WTC11 (cell line): ENCODE measurements at regions of chr20 and their contacts with region 1.

Region 1: DNA sequence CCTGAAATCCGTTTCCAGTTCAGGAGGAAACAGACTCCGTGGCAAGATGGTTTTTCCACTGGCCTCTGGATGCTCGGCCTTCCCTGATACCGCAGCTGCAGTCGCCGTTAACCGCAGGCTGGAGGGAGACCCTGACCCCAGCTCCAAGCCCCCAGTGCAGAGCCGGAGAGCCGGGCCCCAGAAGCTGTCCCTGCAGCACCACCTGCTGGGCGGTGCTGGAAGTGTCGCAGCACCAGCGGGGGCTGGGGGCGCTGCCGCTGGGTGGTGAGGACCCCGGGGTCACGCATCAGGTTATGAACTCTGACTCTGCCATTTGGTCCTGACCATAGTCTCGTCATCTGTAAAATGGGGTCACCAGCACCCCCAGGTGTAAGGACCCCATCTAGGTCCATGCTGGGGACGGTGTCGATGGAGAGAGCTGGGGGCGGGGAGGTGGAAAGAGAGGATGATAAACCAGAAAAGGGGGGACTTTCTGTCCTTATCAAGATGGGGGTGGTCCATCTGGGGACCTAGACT is 20.7 kb upstream of the CHRNA4 start:
- DNase-seq: peak; percentile 79
- ATAC-seq: peak; percentile 65
- H3K4me3 Mint-ChIP-seq: no peak overlapping the region
- H3K27ac Mint-ChIP-seq: no peak overlapping the region
- H3K4me1 Mint-ChIP-seq: peaks cover 18% of the 10 kb centered on the region
- H3K27me3 Mint-ChIP-seq: peaks cover 15% of the 10 kb centered on the region
- CTCF ChIP-seq: peak; percentile 95

Region 2: GRCh38 chr20:63253438-63254236 is 128.2 kb before region 1 on chr20:
- CTCF ChIA-PET with region 1: interaction called, 10 read pairs
- POLR2A ChIA-PET with region 1: no interaction called
- DNase-seq: peak; percentile 79
- ATAC-seq: peak; percentile 47
- H3K4me3 Mint-ChIP-seq: peak overlapping the region; percentile 62
- H3K27ac Mint-ChIP-seq: no peak overlapping the region
- H3K4me1 Mint-ChIP-seq: peaks cover 23% of the 10 kb centered on the region
- H3K27me3 Mint-ChIP-seq: peaks cover 51% of the 10 kb centered on the region
- CTCF ChIP-seq: no peak

Region 3: GRCh38 chr20:63309261-63310071 is 72.4 kb before region 1 on chr20:
- CTCF ChIA-PET with region 1: interaction called, 191 read pairs
- POLR2A ChIA-PET with region 1: interaction called, 3 read pairs
- DNase-seq: peak; percentile 75
- ATAC-seq: peak; percentile 76
- H3K4me3 Mint-ChIP-seq: no peak overlapping the region
- H3K27ac Mint-ChIP-seq: no peak overlapping the region
- H3K4me1 Mint-ChIP-seq: no peaks in the 10 kb centered on the region
- H3K27me3 Mint-ChIP-seq: peaks cover 3% of the 10 kb centered on the region; the same call in 1 of the 2 replicates
- CTCF ChIP-seq: peak; percentile 94

Region 4: DNA sequence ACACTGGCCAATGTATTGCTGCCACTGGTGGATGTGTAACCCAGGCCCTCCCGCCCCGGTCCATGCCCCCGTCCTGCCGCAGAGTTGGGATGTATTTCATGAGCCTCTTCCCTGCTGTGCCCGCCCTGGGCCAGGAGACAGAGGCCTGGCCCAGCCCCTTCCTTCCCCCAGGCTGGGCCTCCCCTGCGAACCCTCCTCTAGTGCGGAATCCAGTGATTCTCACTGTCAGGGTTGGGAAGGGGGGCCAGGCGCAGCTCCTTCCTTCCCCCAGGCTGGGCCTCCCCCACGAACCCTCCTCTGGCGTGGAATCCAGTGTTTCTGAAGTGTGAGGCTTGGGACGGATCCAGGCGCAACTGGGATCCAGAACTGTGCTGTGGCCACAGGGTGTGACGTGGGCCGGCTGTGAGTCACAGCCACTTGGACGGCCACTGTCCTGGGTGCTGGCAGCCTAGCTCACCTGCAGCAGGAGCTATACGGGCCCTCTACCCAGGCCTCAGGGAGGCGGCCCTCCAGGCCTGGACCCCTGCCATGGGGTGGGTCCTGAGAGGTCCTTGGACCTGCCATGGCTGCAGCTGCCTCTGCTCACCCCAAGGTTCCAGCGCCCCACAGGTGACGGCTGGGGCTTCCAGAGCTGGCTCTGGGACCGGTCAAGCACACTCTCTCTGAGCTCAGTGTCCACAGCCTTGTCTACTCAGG is 60.6 kb before region 1 on chr20:
- CTCF ChIA-PET with region 1: interaction called, 14 read pairs
- POLR2A ChIA-PET with region 1: no interaction called
- DNase-seq: no peak
- ATAC-seq: no peak
- H3K4me3 Mint-ChIP-seq: no peak overlapping the region
- H3K27ac Mint-ChIP-seq: no peak overlapping the region
- H3K4me1 Mint-ChIP-seq: peaks cover 2% of the 10 kb centered on the region; the same call in 1 of the 2 replicates
- H3K27me3 Mint-ChIP-seq: no peaks in the 10 kb centered on the region
- CTCF ChIP-seq: no peak

Region 5: GRCh38 chr20:63351811-63352591 is 29.9 kb before region 1 on chr20:
- CTCF ChIA-PET with region 1: interaction called, 20 read pairs
- POLR2A ChIA-PET with region 1: interaction called, 3 read pairs
- DNase-seq: peak; percentile 79
- ATAC-seq: peak; percentile 87
- H3K4me3 Mint-ChIP-seq: no peak overlapping the region
- H3K27ac Mint-ChIP-seq: no peak overlapping the region
- H3K4me1 Mint-ChIP-seq: peaks cover 6% of the 10 kb centered on the region
- H3K27me3 Mint-ChIP-seq: no peaks in the 10 kb centered on the region
- CTCF ChIP-seq: no peak

Region 6: DNA sequence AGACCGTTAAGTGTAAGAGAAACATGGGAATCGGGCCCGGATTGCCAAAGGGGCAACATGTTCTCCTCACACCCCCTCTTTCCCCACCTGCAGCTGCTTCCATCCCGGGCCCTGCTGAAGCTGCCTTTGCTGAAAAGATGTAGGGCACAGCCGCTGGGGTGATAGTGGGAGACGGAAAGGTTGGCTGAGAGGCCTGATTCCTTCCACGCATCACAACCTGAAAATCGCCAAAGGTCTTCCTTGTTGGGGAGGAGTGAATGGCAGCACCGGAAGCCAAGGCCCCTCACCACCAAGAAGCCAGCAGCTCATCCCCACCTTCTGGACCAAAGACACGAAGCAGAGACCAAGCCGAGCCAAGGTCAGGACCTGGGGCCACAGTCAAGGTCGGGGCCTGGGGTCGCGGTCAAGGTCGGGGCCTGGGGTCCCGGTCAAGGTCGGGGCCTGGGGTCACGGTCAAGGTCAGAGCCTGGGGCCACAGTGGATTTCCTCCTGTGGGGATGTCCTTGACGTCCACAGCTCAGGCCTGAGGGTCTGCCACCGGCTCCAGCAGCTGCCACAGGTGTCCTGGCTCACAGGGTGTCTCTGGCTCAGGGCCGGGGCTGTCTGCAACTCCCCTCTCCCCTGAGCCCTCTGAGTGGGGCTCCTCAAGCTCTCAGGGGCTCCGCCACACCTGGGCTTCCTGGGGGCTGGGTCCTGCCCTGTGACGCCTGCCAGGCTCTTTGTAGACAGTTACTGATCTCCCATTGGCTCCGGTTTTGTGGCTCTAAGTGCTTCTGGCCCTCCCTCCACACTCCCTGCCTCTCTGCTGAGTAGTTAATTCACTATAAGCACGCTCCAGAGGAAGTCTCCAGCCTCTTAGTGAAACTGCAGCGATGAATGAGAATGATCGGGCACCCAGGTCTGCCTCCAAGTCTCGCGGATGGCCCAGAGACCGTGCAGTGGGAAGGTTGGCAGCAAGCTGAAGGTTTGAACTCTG is 15.2 kb before region 1 on chr20:
- CTCF ChIA-PET with region 1: interaction called, 68 read pairs
- POLR2A ChIA-PET with region 1: interaction called, 4 read pairs
- DNase-seq: no peak
- ATAC-seq: no peak
- H3K4me3 Mint-ChIP-seq: no peak overlapping the region
- H3K27ac Mint-ChIP-seq: no peak overlapping the region; the same call in 1 of the 2 replicates
- H3K4me1 Mint-ChIP-seq: peaks cover 18% of the 10 kb centered on the region
- H3K27me3 Mint-ChIP-seq: peaks cover 9% of the 10 kb centered on the region
- CTCF ChIP-seq: no peak

Region 7: DNA sequence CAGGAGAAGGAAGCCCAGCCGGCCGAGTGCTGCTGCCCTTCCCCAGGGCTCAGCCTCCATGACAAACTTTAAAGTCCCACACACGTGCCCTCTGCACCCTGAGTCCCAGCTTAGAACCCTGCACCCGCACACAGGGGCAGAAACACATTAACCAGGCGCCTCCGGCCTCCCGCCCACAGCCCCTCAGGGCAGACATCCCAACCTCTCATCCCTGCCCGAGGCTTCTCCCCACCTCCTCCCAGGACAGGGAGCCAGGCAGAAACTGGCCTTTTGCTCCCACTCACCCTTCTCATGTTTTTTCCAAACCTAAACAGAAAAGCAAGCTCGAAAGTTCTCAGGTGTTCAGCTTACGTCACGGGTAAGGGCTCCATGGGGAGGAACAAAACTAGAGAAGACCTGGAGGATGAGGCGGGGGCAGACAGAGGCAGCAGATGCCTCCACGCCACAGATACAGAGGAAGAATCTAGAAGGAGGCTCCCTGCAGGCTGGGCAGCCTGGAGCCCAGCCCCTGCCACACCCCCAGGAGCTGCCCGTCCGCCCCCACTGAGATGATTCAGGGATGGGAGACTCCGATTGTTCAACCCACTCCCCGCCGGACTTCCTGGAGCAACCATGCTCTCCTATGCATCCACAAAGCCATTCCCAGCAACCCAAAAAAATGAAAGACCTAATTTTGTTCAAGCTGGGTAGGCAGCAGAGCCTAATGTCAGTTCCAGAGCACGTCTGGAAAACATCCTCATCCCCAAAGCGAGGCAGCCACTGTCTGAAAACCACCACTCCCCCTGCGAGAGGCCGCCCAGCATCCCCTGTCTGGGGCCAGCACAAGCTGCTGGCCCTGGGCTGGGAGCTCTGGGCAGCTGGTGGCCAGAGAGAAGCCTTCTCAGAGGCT is 81.8 kb after region 1 on chr20:
- CTCF ChIA-PET with region 1: interaction called, 10 read pairs
- POLR2A ChIA-PET with region 1: no interaction called
- DNase-seq: no peak
- ATAC-seq: no peak
- H3K4me3 Mint-ChIP-seq: no peak overlapping the region
- H3K27ac Mint-ChIP-seq: peak overlapping the region; percentile 4; the same call in 1 of the 2 replicates
- H3K4me1 Mint-ChIP-seq: peaks cover 29% of the 10 kb centered on the region
- H3K27me3 Mint-ChIP-seq: no peaks in the 10 kb centered on the region
- CTCF ChIP-seq: no peak